Naive thymus-derived CD4-positive, alpha-beta T cell (primary cell): ENCODE measurements at regions of chr1 and their contacts with region 1.

Region 1: GRCh38 chr1:67430352-67431155 is at the start of gene SERBP1:
- DNase-seq: peak; percentile 86 to 97 (median 94)
- ATAC-seq: peak; percentile 94
- H3K4me3 ChIP-seq: peak within 1 kb of the TSS; percentile 98
- H3K4me3 Mint-ChIP-seq: peak within 1 kb of the TSS; percentile 93 to 99 (median 95)
- H3K27ac ChIP-seq: peak within 1 kb of the TSS; percentile 96
- H3K27ac Mint-ChIP-seq: peak within 1 kb of the TSS; percentile 95 to 99 (median 96)
- H3K4me1 ChIP-seq: peaks cover 5 to 16% of the 10 kb centered on the region in 2 donors
- H3K4me1 Mint-ChIP-seq: peaks cover 28 to 64% (median 57%) of the 10 kb centered on the region in 7 donors
- H3K27me3 ChIP-seq: no peaks in the 10 kb centered on the region
- H3K27me3 Mint-ChIP-seq: no peaks in the 10 kb centered on the region
- total RNA-seq, gene SERBP1: 108 to 282 (median 151) TPM

Region 2: DNA sequence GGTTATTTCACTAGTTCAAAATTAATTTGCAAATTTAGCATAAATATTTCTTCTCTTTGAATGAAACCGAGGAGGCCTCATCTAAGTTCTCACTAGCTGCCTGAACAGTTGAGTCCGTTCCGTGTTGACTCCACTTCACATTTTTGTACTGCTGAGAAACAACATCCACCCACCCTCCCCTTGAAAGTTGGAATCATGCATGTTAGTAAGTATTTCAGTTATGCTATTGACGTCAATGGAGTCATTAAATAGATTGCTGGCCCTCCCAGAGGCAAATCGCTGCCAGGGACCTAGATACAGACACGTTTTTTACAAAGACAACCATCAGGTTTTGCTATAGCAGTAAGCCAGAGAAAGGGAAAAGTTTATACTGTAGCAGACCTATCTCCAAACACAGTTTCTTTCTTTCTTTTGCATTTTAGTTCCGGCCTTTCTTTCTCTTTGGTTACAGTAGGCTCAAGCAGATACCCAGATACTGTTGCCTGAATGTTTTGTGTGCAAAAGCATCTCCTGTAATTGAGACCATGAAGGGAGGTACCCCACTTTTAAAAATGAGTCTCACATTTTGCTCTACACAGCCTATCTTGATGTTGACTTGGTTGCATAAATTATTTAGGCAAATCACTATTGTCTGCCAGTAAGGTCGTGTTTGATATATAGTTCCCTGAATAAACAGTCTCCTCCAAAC is 1159.2 kb before region 1 on chr1:
- CTCF ChIA-PET with region 1: no interaction called
- POLR2A ChIA-PET with region 1: no interaction called
- intact Hi-C with region 1: loop called in 1 of 2 experiments (anchors 10 kb)
- DNase-seq: peak in 7 of 9 donors; percentile 43 to 72 (median 64)
- ATAC-seq: peak; percentile 64
- H3K4me3 ChIP-seq: no peak overlapping the region
- H3K4me3 Mint-ChIP-seq: peak overlapping the region in 9 of 10 donors; percentile 22 to 69 (median 33)
- H3K27ac ChIP-seq: peak overlapping the region; percentile 59
- H3K27ac Mint-ChIP-seq: peak overlapping the region; percentile 60 to 92 (median 87)
- H3K4me1 ChIP-seq: peaks cover 30 to 43% of the 10 kb centered on the region in 2 donors
- H3K4me1 Mint-ChIP-seq: peaks cover 36 to 69% (median 54%) of the 10 kb centered on the region in 7 donors
- H3K27me3 ChIP-seq: no peaks in the 10 kb centered on the region
- H3K27me3 Mint-ChIP-seq: no peaks in the 10 kb centered on the region

Region 3: GRCh38 chr1:66929999-66930822 is 500.3 kb before region 1 on chr1:
- CTCF ChIA-PET with region 1: interaction called, 3 read pairs
- POLR2A ChIA-PET with region 1: no interaction called
- intact Hi-C with region 1: loop called in 1 of 2 experiments (anchors 1 kb)
- DNase-seq: peak; percentile 88 to 97 (median 92)
- ATAC-seq: peak; percentile 88
- H3K4me3 ChIP-seq: peak overlapping the region; percentile 69
- H3K4me3 Mint-ChIP-seq: peak overlapping the region; percentile 85 to 98 (median 92)
- H3K27ac ChIP-seq: peak overlapping the region; percentile 91
- H3K27ac Mint-ChIP-seq: peak overlapping the region; percentile 79 to 95 (median 90)
- H3K4me1 ChIP-seq: peaks cover 45 to 48% of the 10 kb centered on the region in 2 donors
- H3K4me1 Mint-ChIP-seq: peaks cover 38 to 88% (median 70%) of the 10 kb centered on the region in 7 donors
- H3K27me3 ChIP-seq: no peaks in the 10 kb centered on the region
- H3K27me3 Mint-ChIP-seq: no peaks in the 10 kb centered on the region

Region 4: DNA sequence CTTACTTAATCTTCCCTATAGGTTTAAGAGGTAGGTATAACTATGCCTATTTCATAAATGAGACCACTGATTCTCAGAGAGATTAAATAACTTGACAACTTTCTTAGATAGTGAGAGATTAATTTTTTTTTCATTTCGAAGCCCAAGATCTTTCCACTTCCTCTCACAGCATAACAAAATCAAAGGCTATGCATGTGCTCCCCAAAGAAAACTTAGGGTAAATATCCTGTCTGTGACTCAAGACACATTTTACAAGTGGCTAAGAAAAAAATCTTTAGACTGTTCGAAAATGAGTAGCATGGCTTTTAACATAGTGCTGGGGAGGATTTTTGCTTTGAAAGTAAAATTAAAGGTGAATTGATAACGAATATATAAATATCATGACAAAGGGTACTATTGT is 287.6 kb before region 1 on chr1:
- CTCF ChIA-PET with region 1: no interaction called
- POLR2A ChIA-PET with region 1: no interaction called
- intact Hi-C with region 1: loop called in 1 of 2 experiments (anchors 2 kb)
- DNase-seq: peak in 7 of 9 donors; percentile 18 to 77 (median 66)
- ATAC-seq: peak; percentile 80
- H3K4me3 ChIP-seq: no peak overlapping the region
- H3K4me3 Mint-ChIP-seq: peak overlapping the region; percentile 9 to 81 (median 52)
- H3K27ac ChIP-seq: peak overlapping the region; percentile 38
- H3K27ac Mint-ChIP-seq: peak overlapping the region; percentile 3 to 95 (median 86)
- H3K4me1 ChIP-seq: peaks cover 10 to 16% of the 10 kb centered on the region in 2 donors
- H3K4me1 Mint-ChIP-seq: peaks cover 23 to 55% (median 44%) of the 10 kb centered on the region in 7 donors
- H3K27me3 ChIP-seq: no peaks in the 10 kb centered on the region
- H3K27me3 Mint-ChIP-seq: peaks cover 0 to 5% (median 0%) of the 10 kb centered on the region in 5 donors

Region 5: DNA sequence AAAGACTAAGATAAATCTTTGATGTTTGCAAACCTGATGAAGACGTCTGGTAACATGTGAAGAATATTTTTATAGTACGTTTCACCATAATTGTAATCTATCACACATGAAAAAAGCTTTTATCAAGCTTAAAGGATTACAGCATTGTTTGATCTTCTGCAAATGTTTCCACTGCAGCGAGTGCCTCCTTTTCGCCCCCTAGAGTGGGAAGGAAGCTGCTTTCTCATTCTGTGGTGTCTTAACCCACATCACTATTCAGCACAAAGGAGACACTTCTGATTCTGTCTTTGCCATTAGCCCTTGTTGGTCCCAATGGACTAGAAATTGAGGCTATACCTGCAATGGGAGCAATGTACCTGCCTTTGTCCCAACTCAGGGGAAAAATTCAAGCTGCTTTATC is 168.9 kb before region 1 on chr1:
- CTCF ChIA-PET with region 1: no interaction called
- POLR2A ChIA-PET with region 1: no interaction called
- intact Hi-C with region 1: loop called in 1 of 2 experiments (anchors 5 kb)
- DNase-seq: peak in 8 of 9 donors; percentile 24 to 67 (median 57)
- ATAC-seq: peak; percentile 52
- H3K4me3 ChIP-seq: no peak overlapping the region
- H3K4me3 Mint-ChIP-seq: peak overlapping the region in 7 of 10 donors; percentile 17 to 73 (median 34)
- H3K27ac ChIP-seq: no peak overlapping the region
- H3K27ac Mint-ChIP-seq: peak overlapping the region in 1 of 9 donors; percentile 8
- H3K4me1 ChIP-seq: peaks cover 17 to 22% of the 10 kb centered on the region in 2 donors
- H3K4me1 Mint-ChIP-seq: peaks cover 12 to 44% (median 31%) of the 10 kb centered on the region in 7 donors
- H3K27me3 ChIP-seq: no peaks in the 10 kb centered on the region
- H3K27me3 Mint-ChIP-seq: no peaks in the 10 kb centered on the region

Region 6: DNA sequence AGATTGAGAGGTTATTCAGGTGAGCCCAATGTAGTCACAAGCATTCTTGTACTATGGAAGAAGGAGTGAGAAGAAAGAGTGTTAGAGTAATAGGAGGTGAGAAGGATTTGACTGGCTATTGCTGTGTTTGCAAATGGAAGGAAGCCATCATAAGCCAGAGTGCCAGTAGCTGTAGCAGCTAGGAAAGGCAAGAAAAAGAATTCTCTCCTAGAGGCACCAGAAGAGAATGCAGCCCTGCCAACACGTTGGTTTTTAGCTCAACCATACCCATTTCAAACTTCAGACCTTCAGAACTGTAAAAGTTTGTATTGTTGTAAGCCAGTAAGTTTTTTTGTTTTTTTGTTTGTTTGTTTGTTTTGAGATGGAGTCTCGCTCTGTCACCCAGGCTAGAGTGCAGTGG is 131.8 kb before region 1 on chr1:
- CTCF ChIA-PET with region 1: no interaction called
- POLR2A ChIA-PET with region 1: no interaction called
- intact Hi-C with region 1: no loop called
- DNase-seq: no peak
- ATAC-seq: no peak
- H3K4me3 ChIP-seq: no peak overlapping the region
- H3K4me3 Mint-ChIP-seq: no peak overlapping the region
- H3K27ac ChIP-seq: no peak overlapping the region
- H3K27ac Mint-ChIP-seq: no peak overlapping the region
- H3K4me1 ChIP-seq: no peaks in the 10 kb centered on the region
- H3K4me1 Mint-ChIP-seq: peaks cover 0 to 69% (median 0%) of the 10 kb centered on the region in 7 donors
- H3K27me3 ChIP-seq: no peaks in the 10 kb centered on the region
- H3K27me3 Mint-ChIP-seq: peaks cover 0 to 17% (median 9%) of the 10 kb centered on the region in 5 donors

Region 7: DNA sequence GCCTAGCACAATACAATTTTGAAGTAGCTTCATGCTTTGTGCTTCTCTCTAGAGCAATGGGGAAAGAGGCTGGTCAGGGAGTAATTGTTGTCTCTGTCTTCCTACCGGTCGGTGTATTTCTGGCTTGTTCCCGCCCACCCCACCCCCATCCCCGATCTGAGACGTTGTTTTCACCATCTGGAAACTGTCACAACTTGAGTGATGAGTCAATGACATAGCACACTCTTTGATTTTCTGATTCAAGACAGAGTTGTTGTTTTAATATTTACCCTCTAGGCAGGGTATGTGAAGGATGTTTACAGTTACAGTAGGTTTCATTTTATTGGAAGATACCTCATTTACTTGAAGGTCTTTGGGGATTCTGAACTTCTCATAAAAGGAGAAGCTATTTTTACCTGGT is 115.9 kb before region 1 on chr1:
- CTCF ChIA-PET with region 1: no interaction called
- POLR2A ChIA-PET with region 1: no interaction called
- intact Hi-C with region 1: loop called in 1 of 2 experiments (anchors 2 kb)
- DNase-seq: no peak
- ATAC-seq: peak; percentile 41
- H3K4me3 ChIP-seq: no peak overlapping the region
- H3K4me3 Mint-ChIP-seq: peak overlapping the region in 4 of 10 donors; percentile 9 to 84 (median 34)
- H3K27ac ChIP-seq: no peak overlapping the region
- H3K27ac Mint-ChIP-seq: peak overlapping the region in 1 of 9 donors; percentile 92
- H3K4me1 ChIP-seq: no peaks in the 10 kb centered on the region
- H3K4me1 Mint-ChIP-seq: peaks cover 0 to 51% (median 0%) of the 10 kb centered on the region in 7 donors
- H3K27me3 ChIP-seq: no peaks in the 10 kb centered on the region
- H3K27me3 Mint-ChIP-seq: peaks cover 0 to 2% (median 0%) of the 10 kb centered on the region in 5 donors

Region 8: DNA sequence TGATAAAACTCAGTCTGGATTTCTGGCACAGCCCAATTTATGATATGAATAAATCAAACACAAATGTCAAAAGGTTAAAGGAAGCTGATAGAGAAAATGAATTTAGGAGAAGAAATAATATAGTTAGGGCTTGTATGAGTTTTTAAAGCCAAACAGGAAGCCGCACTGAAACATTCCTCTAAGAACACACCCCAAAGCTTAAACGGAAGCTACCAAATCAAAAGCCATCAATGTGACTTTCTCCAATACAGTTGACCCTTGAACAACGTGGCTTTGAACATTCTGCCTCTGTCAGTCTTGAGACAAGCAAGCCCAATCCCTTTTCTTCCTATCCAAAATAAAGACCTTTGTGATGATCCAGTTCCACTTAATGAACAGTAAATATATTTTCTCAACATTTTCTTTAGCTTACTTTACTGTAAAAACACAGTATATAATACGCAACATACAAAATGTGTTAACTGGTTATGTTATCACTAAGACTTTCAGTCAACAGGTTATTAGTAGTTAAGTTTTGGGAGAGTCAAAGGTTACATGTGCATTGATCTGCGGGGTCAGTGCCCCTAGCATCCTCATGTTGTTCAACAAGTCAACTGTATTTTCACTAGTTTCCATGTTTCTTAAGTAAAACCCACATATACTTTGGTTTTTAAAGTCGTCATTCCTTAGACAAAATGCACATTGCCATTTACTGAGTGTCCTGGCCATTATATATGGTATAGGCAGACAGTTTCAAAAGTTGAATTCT is 11.5 kb before region 1 on chr1:
- CTCF ChIA-PET with region 1: no interaction called
- POLR2A ChIA-PET with region 1: interaction called, 8 read pairs
- intact Hi-C with region 1: loop called (anchors 1 to 2 kb)
- DNase-seq: no peak
- ATAC-seq: no peak
- H3K4me3 ChIP-seq: no peak overlapping the region
- H3K4me3 Mint-ChIP-seq: peak overlapping the region in 3 of 10 donors; percentile 12 to 44 (median 14)
- H3K27ac ChIP-seq: no peak overlapping the region
- H3K27ac Mint-ChIP-seq: peak overlapping the region; percentile 22 to 77 (median 56)
- H3K4me1 ChIP-seq: peaks cover 0 to 15% of the 10 kb centered on the region in 2 donors
- H3K4me1 Mint-ChIP-seq: peaks cover 38 to 79% (median 67%) of the 10 kb centered on the region in 7 donors
- H3K27me3 ChIP-seq: no peaks in the 10 kb centered on the region
- H3K27me3 Mint-ChIP-seq: no peaks in the 10 kb centered on the region

Region 9: DNA sequence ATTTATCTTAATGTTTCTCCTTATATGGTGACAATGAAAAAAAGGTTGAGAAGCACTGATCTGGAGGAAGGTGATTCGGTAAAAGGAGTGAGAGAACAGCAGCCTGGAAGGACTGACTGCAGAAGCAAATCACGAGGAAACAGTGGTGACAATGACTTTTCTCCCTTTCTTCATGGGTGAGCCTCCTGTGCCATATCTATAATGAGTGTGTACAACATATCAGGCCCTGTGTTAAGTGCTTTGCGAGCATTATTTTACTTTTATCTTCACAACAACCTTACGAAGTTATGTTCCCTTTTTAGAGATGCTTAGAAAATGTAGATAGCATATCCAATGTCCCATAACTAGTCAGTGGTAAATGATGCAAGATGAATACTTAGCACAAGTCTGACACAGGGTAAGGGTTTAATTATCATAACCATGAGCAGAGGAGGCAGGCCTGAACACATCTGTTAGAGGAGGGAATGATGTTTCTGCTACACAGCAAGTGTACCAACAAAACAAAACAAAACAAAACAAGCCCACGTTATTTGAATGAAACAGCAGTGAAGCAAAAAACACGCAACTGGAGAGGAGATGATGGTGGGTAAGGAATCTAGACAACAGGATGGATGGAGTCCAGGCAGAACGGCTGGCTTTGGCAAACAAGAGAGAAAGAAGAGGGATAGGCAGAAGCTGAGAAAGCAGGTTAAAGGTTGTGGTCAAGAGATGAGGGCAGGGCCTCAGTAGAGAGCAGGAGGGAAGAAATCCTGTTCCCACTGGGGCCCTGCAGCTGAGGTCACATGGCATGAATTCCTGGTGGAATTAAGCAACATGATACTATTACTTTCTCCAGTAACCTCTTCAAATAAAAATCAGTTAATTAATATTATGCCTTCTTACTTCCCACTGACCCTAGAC is 373.1 kb after region 1 on chr1:
- CTCF ChIA-PET with region 1: no interaction called
- POLR2A ChIA-PET with region 1: no interaction called
- intact Hi-C with region 1: no loop called
- DNase-seq: no peak
- ATAC-seq: no peak
- H3K4me3 ChIP-seq: no peak overlapping the region
- H3K4me3 Mint-ChIP-seq: no peak overlapping the region
- H3K27ac ChIP-seq: no peak overlapping the region
- H3K27ac Mint-ChIP-seq: peak overlapping the region in 1 of 9 donors; percentile 0
- H3K4me1 ChIP-seq: no peaks in the 10 kb centered on the region
- H3K4me1 Mint-ChIP-seq: no peaks in the 10 kb centered on the region
- H3K27me3 ChIP-seq: peaks cover 0 to 3% of the 10 kb centered on the region in 2 donors
- H3K27me3 Mint-ChIP-seq: peaks cover 36 to 63% (median 42%) of the 10 kb centered on the region in 5 donors